ENCODE measurements at regions of chr1 and their contacts with region 1.

Region 1: DNA sequence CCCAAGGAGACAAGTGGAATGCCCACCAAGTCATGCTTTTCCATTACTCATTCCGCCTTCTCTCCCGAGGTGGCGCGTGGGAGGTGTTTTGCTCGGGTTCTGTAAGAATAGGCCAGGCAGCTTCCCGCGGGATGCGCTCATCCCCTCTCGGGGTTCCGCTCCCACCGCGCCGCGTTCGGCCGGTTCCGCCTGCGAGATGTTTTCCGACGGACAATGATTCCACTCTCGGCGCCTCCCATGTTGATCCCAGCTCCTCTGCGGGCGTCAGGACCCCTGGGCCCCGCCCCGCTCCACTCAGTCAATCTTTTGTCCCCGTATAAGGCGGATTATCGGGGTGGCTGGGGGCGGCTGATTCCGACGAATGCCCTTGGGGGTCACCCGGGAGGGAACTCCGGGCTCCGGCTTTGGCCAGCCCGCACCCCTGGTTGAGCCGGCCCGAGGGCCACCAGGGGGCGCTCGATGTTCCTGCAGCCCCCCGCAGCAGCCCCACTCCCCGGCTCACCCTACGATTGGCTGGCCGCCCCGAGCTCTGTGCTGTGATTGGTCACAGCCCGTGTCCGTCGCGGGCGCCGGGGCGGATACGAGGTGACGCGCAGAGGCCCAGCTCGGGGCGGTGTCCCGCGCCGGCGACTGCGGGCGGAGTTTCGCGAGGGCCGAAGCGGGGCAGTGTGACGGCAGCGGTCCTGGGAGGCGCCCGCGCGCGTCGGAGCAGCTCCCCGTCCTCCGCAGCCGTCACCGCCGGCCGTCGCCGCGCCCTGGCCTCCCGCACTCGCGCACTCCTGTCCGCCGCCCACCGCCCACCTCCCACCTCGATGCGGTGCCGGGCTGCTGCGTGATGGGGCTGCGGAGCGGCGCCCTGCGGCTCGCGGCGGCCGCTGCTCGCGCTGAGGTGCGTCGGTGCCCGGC is at the start of gene KIF1B:
- DNase-seq: peak; percentile 79
- ATAC-seq: peak; percentile 98
- H3K4me3 ChIP-seq: peak within 1 kb of the TSS; percentile 83 to 98
- H3K27ac ChIP-seq: peak within 1 kb of the TSS; percentile 90
- H3K4me1 ChIP-seq: peaks cover 20% of the 10 kb centered on the region
- H3K27me3 ChIP-seq: no peaks in the 10 kb centered on the region
- CTCF ChIP-seq: peak; percentile 98
- total RNA-seq, gene KIF1B: 33.0 TPM

Region 2: GRCh38 chr1:8987881-8988617 is 1222.1 kb before region 1 on chr1:
- CTCF ChIA-PET with region 1: no interaction called
- POLR2A ChIA-PET with region 1: interaction called, 10 read pairs
- in situ Hi-C with region 1: no loop called
- intact Hi-C with region 1: no loop called
- DNase-seq: no peak
- ATAC-seq: peak; percentile 64
- H3K4me3 ChIP-seq: no peak overlapping the region
- H3K27ac ChIP-seq: peak overlapping the region; percentile 82
- H3K4me1 ChIP-seq: peaks cover 40% of the 10 kb centered on the region
- H3K27me3 ChIP-seq: no peaks in the 10 kb centered on the region
- CTCF ChIP-seq: peak; percentile 97

Region 3: GRCh38 chr1:10286244-10286643 is 76.1 kb after region 1 on chr1:
- CTCF ChIA-PET with region 1: no interaction called
- POLR2A ChIA-PET with region 1: no interaction called
- in situ Hi-C with region 1: no loop called
- intact Hi-C with region 1: no loop called
- DNase-seq: no peak
- ATAC-seq: no peak
- H3K4me3 ChIP-seq: no peak overlapping the region
- H3K27ac ChIP-seq: no peak overlapping the region
- H3K4me1 ChIP-seq: no peaks in the 10 kb centered on the region
- H3K27me3 ChIP-seq: no peaks in the 10 kb centered on the region
- CTCF ChIP-seq: no peak

Region 4: GRCh38 chr1:10338047-10338446 is 127.9 kb after region 1 on chr1:
- CTCF ChIA-PET with region 1: interaction called, 3 read pairs
- POLR2A ChIA-PET with region 1: no interaction called
- in situ Hi-C with region 1: no loop called
- intact Hi-C with region 1: loop called (anchors 10 kb)
- DNase-seq: peak; percentile 15
- ATAC-seq: peak; percentile 95
- H3K4me3 ChIP-seq: no peak overlapping the region
- H3K27ac ChIP-seq: no peak overlapping the region
- H3K4me1 ChIP-seq: no peaks in the 10 kb centered on the region
- H3K27me3 ChIP-seq: no peaks in the 10 kb centered on the region
- CTCF ChIP-seq: peak; percentile 91

Region 5: DNA sequence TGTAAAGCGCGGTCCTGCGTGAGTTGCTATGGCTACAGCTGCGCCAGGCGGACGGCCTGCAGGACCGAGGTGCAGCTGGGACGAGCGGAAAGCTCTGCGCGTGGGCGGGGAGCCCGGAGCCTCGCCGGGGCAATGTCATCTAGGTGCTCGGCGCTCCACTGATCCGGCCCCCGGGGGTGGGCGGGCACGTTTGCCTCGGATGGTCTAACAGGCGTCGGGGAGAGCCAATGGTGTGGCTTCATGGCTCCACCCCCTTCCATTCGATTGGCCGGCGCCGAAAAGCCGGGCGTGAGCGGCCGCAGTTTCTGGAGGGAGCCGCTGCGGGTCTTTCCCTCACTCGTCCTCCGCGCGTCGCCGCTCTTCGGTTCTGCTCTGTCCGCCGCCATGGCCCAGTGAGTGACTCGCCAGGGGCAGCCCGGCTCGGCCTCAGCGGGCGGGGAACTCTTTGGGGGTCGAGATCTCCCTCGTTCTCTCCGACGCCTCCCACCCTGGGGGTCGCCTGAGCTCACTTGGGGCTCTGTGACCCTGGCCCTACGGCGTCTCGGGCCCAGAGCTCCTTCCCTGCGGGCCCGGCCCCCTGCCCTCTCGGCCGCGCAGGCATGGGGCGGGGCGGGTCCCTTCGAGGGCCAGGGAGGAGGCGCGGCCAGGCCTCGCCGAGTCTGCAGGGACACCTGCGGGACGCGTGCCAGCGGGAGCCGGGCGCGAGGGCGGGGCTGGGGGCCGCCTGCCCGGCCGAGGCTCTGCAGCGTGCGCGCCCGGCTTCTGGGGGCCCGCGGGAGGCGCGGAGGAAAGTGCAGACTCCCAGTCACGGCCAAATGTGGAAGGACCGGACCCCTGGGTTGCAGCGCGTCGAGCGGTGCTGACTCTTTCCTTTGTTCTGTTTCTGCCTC is 188.8 kb after region 1 on chr1 and contains the start of gene PGD:
- CTCF ChIA-PET with region 1: no interaction called
- POLR2A ChIA-PET with region 1: interaction called, 10 read pairs
- in situ Hi-C with region 1: no loop called
- intact Hi-C with region 1: no loop called
- DNase-seq: peak; percentile 78
- ATAC-seq: peak; percentile 99
- H3K4me3 ChIP-seq: peak within 1 kb of the TSS; percentile 68 to 83
- H3K27ac ChIP-seq: peak within 1 kb of the TSS; percentile 74
- H3K4me1 ChIP-seq: 0 out of 2 replicates have a peak, but pooled peaks cover 5% of the 10 kb centered on the region
- H3K27me3 ChIP-seq: no peaks in the 10 kb centered on the region
- CTCF ChIP-seq: no peak
- total RNA-seq, gene PGD: 158 TPM